ENCODE measurements at regions of chr17 and their contacts with region 1.

Region 1: DNA sequence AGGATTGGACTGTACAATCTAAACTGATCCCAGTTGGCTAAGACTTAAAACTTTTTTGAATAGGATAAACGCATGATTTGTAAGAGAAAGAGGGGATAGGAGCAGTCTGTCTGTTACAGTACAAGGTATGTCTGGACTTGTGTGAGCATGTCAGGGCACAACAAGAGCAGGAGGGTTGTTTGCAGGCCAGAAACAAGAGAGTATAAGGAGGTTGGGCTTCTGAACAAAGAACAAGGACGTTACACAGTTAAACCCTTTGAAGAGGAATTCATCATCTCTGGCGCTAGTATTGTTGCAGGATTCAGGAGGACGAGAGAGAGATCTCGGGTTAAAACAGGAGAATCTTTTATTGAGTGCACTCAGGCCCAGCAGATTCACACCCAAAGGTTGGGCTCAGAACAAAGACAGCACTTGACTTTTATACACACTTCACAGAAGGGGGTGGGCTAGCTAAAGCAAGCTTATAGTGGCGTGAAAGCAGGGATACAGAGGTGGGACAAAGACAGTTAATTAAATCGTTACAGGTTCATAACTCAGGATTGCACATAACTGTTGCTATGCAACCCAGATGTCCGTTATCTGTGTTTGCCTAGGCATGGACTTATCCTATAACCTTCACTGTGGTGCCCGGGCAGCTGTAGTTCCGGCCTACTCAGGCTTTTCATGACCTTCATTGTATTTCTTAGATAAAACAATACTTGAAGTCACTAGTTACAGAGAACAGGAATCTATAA is 34.3 kb downstream of the SEC14L1 start:
- DNase-seq: no peak
- H3K4me3 ChIP-seq: no peak overlapping the region
- H3K27ac ChIP-seq: no peak overlapping the region
- H3K4me1 ChIP-seq: no peaks in the 10 kb centered on the region
- H3K27me3 ChIP-seq: no peaks in the 10 kb centered on the region
- CTCF ChIP-seq: no peak
- POLR2A ChIP-seq: no peak

Region 2: GRCh38 chr17:75393523-75394331 is 1781.4 kb before region 1 on chr17:
- intact Hi-C with region 1: no loop called
- DNase-seq: peak; percentile 92 to 97
- H3K4me3 ChIP-seq: peak overlapping the region; percentile 50 to 71 (median 65)
- H3K27ac ChIP-seq: peak overlapping the region; percentile 85 to 88
- H3K4me1 ChIP-seq: peaks cover 9 to 10% of the 10 kb centered on the region in 2 donors
- H3K27me3 ChIP-seq: no peaks in the 10 kb centered on the region
- CTCF ChIP-seq: peak; percentile 7 to 36 (median 34)
- POLR2A ChIP-seq: no peak

Region 3: DNA sequence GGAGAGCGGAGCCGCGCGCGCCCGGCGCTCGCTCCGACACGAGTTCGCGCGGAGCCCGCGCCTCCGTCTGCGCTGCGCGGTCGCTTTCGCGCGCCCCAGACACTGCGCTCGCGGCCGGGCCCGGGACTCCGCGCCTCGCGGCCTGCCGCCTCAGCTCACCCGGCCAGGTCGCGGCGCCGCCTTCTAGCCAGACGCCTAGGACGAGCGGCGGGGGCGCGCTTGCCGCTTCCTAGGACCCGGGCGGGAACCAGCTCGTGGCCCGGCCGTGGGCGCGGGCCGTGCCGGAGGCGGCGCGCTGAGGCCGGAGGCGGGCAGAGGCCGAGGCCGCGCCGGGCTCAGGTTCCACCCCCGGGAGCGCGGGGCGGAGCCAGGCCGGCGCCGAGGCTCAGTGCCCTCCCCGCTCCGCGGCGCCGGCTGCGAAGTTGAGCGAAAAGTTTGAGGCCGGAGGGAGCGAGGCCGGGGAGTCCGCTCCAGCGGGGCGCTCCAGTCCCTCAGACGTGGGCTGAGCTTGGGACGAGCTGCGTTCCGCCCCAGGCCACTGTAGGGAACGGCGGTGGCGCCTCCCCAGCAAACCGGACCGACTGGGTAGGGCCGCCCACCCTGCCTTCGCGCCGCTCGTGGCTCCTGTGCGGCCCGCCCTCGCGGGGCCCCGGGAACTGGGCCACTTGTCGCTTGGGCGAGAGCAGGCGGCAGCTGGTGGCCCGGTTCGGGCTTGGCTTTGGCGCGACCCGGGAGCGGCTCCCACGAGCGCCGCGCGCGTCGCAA is 790.7 kb before region 1 on chr17 and contains the start of gene SPHK1:
- intact Hi-C with region 1: loop called (anchors 5 kb)
- DNase-seq: no peak
- H3K4me3 ChIP-seq: peak within 1 kb of the TSS; percentile 51 to 66 (median 62)
- H3K27ac ChIP-seq: peak within 1 kb of the TSS; percentile 88 to 89
- H3K4me1 ChIP-seq: peaks cover 0 to 20% of the 10 kb centered on the region in 2 donors
- H3K27me3 ChIP-seq: no peaks in the 10 kb centered on the region
- CTCF ChIP-seq: no peak
- POLR2A ChIP-seq: peak; percentile 31
- total RNA-seq, gene SPHK1: 9.6 to 28.5 (median 23.0) TPM

Region 4: DNA sequence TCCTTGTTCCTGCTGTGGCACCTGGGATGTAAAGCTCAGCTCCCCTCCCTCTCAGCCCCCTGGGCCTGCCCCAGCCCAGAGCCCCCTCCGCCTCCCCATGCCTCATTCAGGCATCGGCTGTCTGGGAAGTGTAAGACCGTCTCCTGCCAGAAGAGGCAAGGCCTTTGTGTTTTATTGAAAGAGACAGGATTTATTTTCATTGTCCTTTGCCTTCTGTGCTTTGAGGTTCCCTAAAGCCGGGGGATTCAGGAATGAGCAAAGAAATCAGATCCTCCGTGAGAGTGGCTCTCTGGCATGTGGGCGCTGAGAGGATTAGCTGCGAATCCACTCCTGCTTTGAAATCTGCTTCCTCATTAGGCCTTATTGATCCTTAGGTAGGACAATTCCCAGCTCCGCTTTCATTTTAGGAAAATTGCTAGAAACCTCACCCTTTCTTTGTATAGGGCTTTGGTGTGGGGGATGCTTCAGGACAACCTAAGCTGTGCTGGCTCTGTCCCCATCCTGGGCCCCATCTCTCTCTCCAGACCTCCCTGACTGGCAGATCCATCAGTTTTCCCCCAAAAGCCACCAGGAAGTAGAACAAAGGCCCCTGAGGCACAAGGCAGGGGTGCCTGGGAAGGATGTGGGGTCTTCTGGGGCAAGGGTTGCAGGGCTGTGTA is 571.9 kb after region 1 on chr17:
- intact Hi-C with region 1: no loop called
- DNase-seq: no peak
- H3K4me3 ChIP-seq: no peak overlapping the region
- H3K27ac ChIP-seq: no peak overlapping the region
- H3K4me1 ChIP-seq: no peaks in the 10 kb centered on the region
- H3K27me3 ChIP-seq: no peaks in the 10 kb centered on the region
- CTCF ChIP-seq: no peak
- POLR2A ChIP-seq: no peak

Measured in breast epithelium (tissue), 4 donors.